ENCODE measurements at regions of chr6 and their contacts with region 1.

Region 1: GRCh38 chr6:132698608-132699007 is 15.2 kb downstream of the VNN1 start:
- DNase-seq: no peak
- CTCF ChIP-seq: no peak

Region 2: GRCh38 chr6:132713352-132714134 is 14.9 kb after region 1 on chr6 and contains the start of gene VNN1:
- CTCF ChIA-PET with region 1: interaction called, 10 read pairs
- POLR2A ChIA-PET with region 1: no interaction called
- DNase-seq: peak; percentile 26
- CTCF ChIP-seq: no peak

Measured in GM10248 (cell line).